CD8-positive, alpha-beta T cell (primary cell): ENCODE measurements at regions of chr12 and their contacts with region 1.

Region 1: GRCh38 chr12:94207849-94208621 is 59.7 kb downstream of the PLXNC1 start:
- DNase-seq: peak in 6 of 9 experiments; percentile 11 to 73 (median 42)
- ATAC-seq: peak; percentile 83
- H3K4me3 ChIP-seq: peak overlapping the region; percentile 36
- H3K4me3 Mint-ChIP-seq: peak overlapping the region; percentile 79
- H3K27ac ChIP-seq: peak overlapping the region; percentile 48 to 82
- H3K27ac Mint-ChIP-seq: peak overlapping the region; percentile 94
- H3K4me1 ChIP-seq: peaks cover 50% of the 10 kb centered on the region
- H3K4me1 Mint-ChIP-seq: peaks cover 56% of the 10 kb centered on the region
- H3K27me3 ChIP-seq: no peaks in the 10 kb centered on the region
- H3K27me3 Mint-ChIP-seq: no peaks in the 10 kb centered on the region
- CTCF ChIP-seq: no peak

Region 2: DNA sequence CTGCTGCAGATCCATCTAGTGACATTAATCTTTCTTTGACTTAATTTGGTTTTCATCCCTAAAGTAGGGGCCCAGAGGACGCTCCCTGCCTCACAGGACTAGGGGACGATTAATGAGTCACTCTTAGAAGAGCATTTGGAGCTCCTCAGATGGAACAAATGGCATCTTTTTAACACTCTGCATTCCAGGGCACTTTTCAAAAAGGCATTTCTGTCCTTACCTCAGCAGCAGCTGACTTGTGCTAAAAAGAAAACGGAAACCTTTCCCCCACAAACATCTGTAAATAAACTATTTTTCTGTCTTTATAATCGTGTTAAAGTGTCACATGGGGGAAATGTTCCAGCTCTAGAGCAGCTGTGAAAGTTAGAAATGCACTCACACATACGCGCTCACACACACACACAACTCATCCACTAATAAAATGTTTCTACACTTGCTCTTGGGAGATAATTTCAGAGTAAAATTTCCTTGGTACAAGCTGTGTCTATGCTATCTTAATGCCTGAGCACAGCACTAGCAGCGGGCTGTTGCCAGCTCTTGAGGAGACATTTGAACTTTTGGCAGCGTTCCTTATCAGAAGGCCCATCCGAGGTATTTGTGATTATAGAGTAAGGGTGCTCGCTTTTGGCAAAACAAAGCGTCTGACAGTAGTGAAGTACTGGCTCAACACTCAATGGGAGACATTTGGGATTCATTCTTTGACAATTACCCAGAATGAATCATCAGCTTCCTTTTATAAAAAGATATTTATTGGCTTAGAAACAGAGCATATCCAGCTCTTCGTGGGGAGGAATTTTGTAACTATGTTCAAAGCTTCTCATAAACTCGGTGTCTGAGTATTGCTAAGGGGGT is 81.7 kb after region 1 on chr12:
- CTCF ChIA-PET with region 1: no interaction called
- POLR2A ChIA-PET with region 1: no interaction called
- intact Hi-C with region 1: loop called in 1 of 2 experiments (anchors 10 kb)
- DNase-seq: no peak
- ATAC-seq: no peak
- H3K4me3 ChIP-seq: no peak overlapping the region
- H3K4me3 Mint-ChIP-seq: no peak overlapping the region
- H3K27ac ChIP-seq: no peak overlapping the region
- H3K27ac Mint-ChIP-seq: peak overlapping the region; percentile 41
- H3K4me1 ChIP-seq: no peaks in the 10 kb centered on the region
- H3K4me1 Mint-ChIP-seq: peaks cover 2% of the 10 kb centered on the region
- H3K27me3 ChIP-seq: no peaks in the 10 kb centered on the region
- H3K27me3 Mint-ChIP-seq: no peaks in the 10 kb centered on the region
- CTCF ChIP-seq: no peak

Region 3: GRCh38 chr12:94459728-94460615 is 251.9 kb after region 1 on chr12 and contains the start of gene CEP83:
- CTCF ChIA-PET with region 1: no interaction called
- POLR2A ChIA-PET with region 1: interaction called, 3 read pairs
- intact Hi-C with region 1: loop called in 1 of 2 experiments (anchors 1 kb)
- DNase-seq: peak; percentile 90 to 98 (median 97)
- ATAC-seq: peak; percentile 96
- H3K4me3 ChIP-seq: peak within 1 kb of the TSS; percentile 94 to 96
- H3K4me3 Mint-ChIP-seq: peak within 1 kb of the TSS; percentile 96
- H3K27ac ChIP-seq: peak within 1 kb of the TSS; percentile 91 to 93
- H3K27ac Mint-ChIP-seq: peak within 1 kb of the TSS; percentile 94
- H3K4me1 ChIP-seq: peaks cover 6% of the 10 kb centered on the region
- H3K4me1 Mint-ChIP-seq: peaks cover 33% of the 10 kb centered on the region
- H3K27me3 ChIP-seq: peaks cover 0 to 2% of the 10 kb centered on the region in 2 experiments
- H3K27me3 Mint-ChIP-seq: peaks cover 5% of the 10 kb centered on the region
- CTCF ChIP-seq: no peak
- total RNA-seq, gene CEP83: 9.7 to 11.2 TPM